ENCODE measurements at regions of chr1 and their contacts with region 1.

Region 1: GRCh38 chr1:207298653-207299346 is 22.7 kb upstream of the CD55 start:
- DNase-seq: no peak
- H3K4me3 Mint-ChIP-seq: no peak overlapping the region
- H3K27ac Mint-ChIP-seq: no peak overlapping the region
- H3K4me1 Mint-ChIP-seq: peaks cover 21% of the 10 kb centered on the region
- H3K27me3 Mint-ChIP-seq: no peaks in the 10 kb centered on the region

Region 2: DNA sequence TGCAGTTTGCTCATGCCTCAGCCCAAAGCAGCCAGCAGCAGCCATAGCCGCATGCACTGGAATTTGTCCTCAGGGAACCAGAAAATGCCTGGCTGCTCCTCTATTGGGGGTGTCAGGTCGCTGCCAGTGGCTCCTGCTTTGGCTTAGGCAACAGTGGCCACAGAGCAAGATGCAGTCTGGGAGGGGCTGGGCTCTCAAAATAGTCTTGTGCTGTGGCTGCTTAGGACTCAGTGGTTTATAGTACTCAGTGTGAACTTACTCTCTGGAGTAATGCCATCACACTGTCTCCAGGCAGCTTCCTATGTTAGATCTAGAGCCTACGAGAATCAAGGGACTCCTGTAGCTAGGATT is 47.7 kb after region 1 on chr1:
- CTCF ChIA-PET with region 1: no interaction called
- intact Hi-C with region 1: loop called (anchors 5 kb)
- DNase-seq: no peak
- H3K4me3 Mint-ChIP-seq: no peak overlapping the region
- H3K27ac Mint-ChIP-seq: no peak overlapping the region
- H3K4me1 Mint-ChIP-seq: peaks cover 86% of the 10 kb centered on the region
- H3K27me3 Mint-ChIP-seq: no peaks in the 10 kb centered on the region

Region 3: DNA sequence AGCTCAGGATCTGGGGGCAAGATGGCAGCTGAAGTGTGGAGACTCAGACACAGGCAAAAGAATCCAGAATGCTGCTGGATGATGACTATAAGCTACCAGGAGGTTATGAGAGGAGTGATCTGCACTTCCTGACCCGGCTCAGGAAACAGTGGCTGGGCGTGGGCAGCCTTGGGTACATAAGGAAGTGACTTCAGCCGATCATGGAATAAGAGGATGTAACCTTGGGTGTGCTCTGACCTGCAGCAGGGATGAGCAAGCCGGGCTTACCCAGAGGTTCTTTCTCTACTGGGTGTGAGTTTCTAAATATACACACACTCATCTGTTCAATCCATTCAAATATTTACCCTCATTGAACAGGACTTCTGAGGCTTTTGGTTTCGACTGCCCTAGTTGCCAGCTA is 549.4 kb after region 1 on chr1:
- CTCF ChIA-PET with region 1: no interaction called
- intact Hi-C with region 1: no loop called
- DNase-seq: peak; percentile 83
- H3K4me3 Mint-ChIP-seq: peak overlapping the region; percentile 22
- H3K27ac Mint-ChIP-seq: peak overlapping the region; percentile 63
- H3K4me1 Mint-ChIP-seq: peaks cover 77% of the 10 kb centered on the region
- H3K27me3 Mint-ChIP-seq: no peaks in the 10 kb centered on the region

Measured in activated naive CD4-positive, alpha-beta T cell treated with anti-CD3 and anti-CD28 coated beads for 36 hours (primary cell).